ENCODE measurements at regions of chr1 and their contacts with region 1.

Region 1: DNA sequence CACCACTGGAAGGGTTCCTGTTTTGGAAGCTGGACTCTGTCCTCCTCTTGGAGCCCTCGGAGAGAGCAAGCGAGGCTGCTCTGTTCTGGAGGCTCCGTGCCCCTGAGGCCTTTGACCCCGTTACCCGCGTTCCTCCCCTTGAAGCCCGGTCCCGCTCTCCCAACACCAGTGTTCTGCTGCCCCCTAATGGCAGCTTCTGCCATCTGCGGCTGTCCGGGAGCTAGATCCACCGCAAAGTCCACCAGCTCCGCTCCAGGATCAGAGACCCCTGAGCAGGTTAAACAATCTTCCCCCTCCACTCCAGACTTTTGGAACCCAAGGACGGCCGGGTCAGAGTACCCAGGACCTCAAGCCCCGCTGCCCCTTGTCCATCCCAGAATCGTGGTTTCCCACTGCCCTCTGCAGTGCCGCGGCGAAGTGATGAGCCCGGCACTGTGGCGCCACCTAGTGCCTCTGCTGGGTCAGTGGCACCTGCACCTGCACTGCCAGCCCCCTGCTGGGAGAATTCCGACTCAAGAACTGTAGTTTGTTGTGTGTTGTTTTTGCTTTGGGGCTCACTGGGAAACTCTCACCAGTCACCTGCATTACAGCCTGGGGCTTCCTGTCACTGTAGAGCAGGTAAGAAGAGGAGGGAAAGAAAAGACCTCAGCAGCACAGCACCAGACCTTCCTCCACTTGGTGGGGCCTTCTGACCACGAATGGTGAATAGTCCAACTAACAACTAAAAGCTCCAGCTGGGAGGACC is 63.5 kb upstream of the NFASC start:
- DNase-seq: no peak
- H3K4me3 ChIP-seq: peak overlapping the region; percentile 59
- CTCF ChIP-seq: peak; percentile 99

Region 2: DNA sequence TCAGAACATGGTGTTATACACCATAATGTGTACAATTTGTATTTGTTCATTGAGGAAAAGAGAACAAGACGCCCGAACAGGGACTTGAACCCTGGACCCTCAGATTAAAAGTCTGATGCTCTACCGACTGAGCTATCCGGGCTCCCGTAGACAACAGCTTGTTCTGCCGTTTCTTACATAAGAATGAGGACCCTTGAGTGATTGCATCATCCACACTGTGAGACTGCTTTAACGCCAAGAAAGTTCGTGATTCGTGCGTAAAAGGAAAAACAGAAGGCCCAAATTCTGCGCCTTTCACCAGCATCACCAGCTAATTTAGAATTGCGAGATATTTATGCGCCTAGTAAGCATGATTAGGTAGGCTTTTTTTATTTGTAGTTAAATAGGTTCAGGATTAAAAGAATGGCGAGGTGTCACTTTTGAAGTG is 300.1 kb before region 1 on chr1:
- CTCF ChIA-PET with region 1: interaction called, 64 read pairs
- POLR2A ChIA-PET with region 1: no interaction called
- DNase-seq: peak; percentile 79
- H3K4me3 ChIP-seq: peak overlapping the region; percentile 55
- CTCF ChIP-seq: no peak

Region 3: DNA sequence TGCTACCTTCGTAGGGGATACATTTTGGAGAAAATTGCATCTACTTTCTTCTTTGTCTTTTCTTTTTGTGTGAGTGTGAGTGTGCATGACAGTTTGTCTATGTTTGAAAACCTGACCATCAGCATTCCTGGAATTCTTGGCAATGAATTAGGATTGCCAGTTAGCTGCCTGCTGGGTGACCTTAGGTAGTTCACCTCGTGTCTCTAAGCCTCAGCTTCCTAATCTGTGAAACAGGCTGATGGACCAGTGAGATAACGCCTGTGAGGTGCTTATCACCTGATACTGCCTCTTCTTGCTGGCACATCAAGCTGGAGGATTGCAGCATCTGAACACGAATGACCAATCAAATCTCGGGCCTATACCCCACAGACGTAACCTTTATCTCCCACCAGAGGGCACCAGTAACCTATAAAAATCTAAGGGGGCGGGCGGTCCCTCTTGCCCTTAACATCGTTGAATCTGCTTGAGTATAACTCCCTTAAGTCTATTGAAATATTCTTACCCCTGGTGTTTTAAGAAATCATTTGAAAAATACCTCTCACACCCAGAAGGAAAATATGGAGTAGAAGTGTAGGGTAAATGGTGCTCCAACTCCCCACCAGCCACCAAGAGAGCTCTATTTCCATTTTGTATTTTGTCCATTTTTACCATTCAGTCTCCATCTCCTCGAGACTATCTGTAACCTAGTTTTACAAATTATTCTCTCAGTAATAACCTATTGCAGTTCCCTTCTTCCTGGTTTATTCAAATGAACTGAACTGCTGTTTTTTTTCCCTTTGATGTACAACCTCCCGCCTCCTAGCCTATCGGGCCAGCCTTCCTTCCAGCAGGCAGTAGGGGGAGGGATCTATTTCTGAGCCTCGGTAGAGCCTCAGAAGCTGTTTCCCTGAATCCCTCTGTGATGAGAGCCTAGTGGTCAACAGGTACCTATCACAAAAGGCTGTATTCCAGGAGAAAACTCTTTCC is 241.2 kb before region 1 on chr1:
- CTCF ChIA-PET with region 1: interaction called, 673 read pairs
- POLR2A ChIA-PET with region 1: interaction called, 6 read pairs
- DNase-seq: no peak
- H3K4me3 ChIP-seq: no peak overlapping the region
- CTCF ChIP-seq: peak; percentile 54

Region 4: GRCh38 chr1:204763706-204764427 is 43.2 kb before region 1 on chr1:
- CTCF ChIA-PET with region 1: interaction called, 24 read pairs
- POLR2A ChIA-PET with region 1: no interaction called
- DNase-seq: peak; percentile 12
- H3K4me3 ChIP-seq: no peak overlapping the region
- CTCF ChIP-seq: peak; percentile 83

Region 5: DNA sequence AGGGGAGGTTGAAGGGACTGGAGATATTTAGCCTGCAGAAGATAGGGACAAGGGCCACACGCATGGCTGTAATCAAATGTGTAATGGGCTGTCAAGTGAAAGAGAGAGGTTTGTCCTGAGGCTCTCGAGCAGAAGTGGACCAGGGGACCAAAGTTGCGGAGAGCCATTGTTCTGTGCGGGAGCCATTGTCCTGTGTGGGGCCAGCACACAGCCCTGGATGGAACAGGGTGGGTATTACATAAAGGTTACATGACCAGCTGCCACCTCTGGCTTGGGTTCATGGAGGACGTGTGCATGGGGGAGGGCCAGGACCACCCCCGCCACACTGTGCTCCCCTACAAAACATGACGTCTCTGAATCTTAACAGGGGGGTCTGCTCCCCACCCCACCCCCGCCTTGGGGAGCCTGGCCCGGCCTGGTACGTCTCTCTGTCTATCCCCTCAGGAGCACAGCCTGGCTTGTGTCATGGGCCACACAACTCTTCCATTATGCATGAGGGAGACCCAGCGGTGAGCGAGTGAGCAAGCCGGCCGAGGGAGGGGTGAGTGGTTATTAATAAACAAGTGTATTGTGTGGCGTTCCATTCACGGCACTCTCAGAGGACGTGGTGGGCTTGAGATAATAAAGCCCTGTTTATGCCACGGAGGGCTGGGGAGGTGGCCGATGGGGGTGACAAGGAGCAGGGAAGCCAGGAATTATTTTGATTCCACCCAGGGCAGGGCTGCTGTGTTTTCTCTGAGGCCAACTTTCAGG is 63.2 kb after region 1 on chr1 and contains the start of gene NFASC:
- CTCF ChIA-PET with region 1: interaction called, 10 read pairs
- POLR2A ChIA-PET with region 1: no interaction called
- DNase-seq: no peak
- H3K4me3 ChIP-seq: no peak within 1 kb of the TSS
- CTCF ChIP-seq: no peak

Region 6: DNA sequence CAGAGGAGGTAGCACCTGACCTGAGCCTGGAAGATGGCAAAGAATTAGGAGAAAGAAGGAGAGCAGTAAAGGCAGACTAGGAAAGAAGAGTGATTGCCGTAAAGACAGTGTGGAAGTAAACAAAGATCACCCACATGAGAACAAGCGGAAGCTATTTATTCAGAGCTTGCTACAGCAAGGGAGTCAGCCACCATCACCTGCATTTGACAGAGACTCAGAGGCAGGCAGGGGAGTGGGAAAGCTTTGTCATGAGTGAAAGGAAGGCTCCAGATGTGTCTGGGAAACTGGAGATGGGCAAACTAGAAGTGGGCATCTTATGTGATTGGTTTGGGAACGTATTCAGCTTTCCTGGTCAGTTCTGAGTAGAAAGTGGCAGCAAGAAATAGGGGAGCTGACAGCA is 128.0 kb after region 1 on chr1:
- CTCF ChIA-PET with region 1: interaction called, 320 read pairs
- POLR2A ChIA-PET with region 1: no interaction called
- DNase-seq: no peak
- H3K4me3 ChIP-seq: no peak overlapping the region
- CTCF ChIP-seq: no peak

Region 7: DNA sequence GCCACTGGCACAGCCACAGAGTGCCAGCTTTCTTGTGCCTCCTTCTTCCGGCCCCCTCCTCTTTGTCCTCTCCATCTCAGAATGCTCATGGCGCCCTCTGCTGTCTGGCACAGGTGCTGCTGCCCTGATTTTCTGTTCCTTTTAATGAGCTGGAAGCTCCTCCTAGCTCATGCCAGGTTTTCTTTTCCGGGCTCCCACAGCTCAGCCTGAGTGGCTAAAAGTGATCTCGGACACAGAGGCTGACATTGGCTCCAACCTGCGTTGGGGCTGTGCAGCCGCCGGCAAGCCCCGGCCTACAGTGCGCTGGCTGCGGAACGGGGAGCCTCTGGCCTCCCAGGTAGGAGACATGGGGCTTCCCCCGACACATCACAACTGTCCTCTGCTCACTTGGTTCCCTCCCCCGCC is 254.6 kb after region 1 on chr1:
- CTCF ChIA-PET with region 1: interaction called, 25 read pairs
- POLR2A ChIA-PET with region 1: no interaction called
- DNase-seq: no peak
- H3K4me3 ChIP-seq: no peak overlapping the region
- CTCF ChIP-seq: peak; percentile 90

Measured in AG04449 (cell line).